Activated CD8-positive, alpha-beta memory T cell treated with anti-CD3 and anti-CD28 coated beads, Interleukin-2, amount 10 ng/mL, durations not matched to agents 7 days and 5 days (primary cell): ENCODE measurements at regions of chr16 and their contacts with region 1.

Region 1: GRCh38 chr16:55842369-55843104 is 9.6 kb upstream of the CES1 start:
- DNase-seq: no peak
- ATAC-seq: no peak
- H3K4me3 Mint-ChIP-seq: no peak overlapping the region
- H3K27ac Mint-ChIP-seq: no peak overlapping the region
- H3K4me1 Mint-ChIP-seq: peaks cover 9% of the 10 kb centered on the region
- H3K27me3 Mint-ChIP-seq: peaks cover 20% of the 10 kb centered on the region

Region 2: GRCh38 chr16:55701442-55702319 is 140.9 kb before region 1 on chr16:
- CTCF ChIA-PET with region 1: interaction called, 10 read pairs
- DNase-seq: peak; percentile 50
- ATAC-seq: peak; percentile 69
- H3K4me3 Mint-ChIP-seq: no peak overlapping the region
- H3K27ac Mint-ChIP-seq: no peak overlapping the region
- H3K4me1 Mint-ChIP-seq: peaks cover 13% of the 10 kb centered on the region
- H3K27me3 Mint-ChIP-seq: peaks cover 12% of the 10 kb centered on the region

Region 3: DNA sequence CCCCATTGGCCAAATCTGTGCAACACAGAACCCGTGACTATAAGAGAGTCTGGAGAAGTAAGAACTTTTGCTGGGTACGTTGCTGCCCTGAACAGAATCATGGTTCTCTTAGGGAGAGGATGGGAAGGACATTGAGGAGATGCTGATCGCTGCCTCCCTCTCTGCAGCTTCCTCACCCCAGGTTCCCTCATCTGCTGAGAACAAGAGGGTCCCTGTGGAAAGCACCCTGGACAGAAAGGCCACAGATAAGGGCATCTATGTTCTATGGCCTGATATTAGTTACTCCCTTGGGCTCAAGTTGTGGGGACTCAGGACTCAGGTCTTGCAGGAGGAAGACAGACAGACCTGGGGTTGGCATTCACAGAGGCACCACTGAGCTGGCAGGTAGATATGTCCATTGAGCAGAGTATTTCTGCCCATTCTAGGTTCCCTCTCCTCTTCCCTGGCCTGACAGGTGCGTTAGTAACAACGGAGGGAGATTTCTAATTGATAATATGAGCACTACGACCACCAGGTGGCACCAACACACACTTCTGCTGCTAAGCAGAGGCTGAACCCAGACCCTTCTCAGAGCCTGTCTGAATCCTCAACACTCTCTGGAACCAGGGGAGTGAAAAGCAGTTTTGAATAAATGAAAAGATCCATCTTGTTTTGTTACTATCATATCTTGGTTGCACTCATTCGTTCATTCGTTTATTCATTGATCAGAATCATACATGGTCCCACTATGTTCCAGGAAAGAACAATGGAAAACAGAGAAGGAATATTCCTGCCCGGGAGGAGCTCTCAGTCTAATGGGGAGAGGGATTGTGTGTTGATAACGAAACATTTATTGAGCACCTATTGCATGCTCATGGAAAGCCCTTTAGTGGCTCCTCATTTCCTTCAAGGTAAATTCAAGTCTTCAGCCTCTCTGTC is 130.3 kb before region 1 on chr16:
- CTCF ChIA-PET with region 1: interaction called, 15 read pairs
- DNase-seq: peak; percentile 69
- ATAC-seq: peak; percentile 57
- H3K4me3 Mint-ChIP-seq: no peak overlapping the region
- H3K27ac Mint-ChIP-seq: no peak overlapping the region
- H3K4me1 Mint-ChIP-seq: no peaks in the 10 kb centered on the region
- H3K27me3 Mint-ChIP-seq: peaks cover 22% of the 10 kb centered on the region